Activated naive CD4-positive, alpha-beta T cell treated with anti-CD3 and anti-CD28 coated beads for 36 hours (primary cell): ENCODE measurements at regions of chr1 and their contacts with region 1.

Region 1: GRCh38 chr1:40032240-40032891 is 8.2 kb upstream of the CAP1 start:
- DNase-seq: peak; percentile 76
- H3K4me3 Mint-ChIP-seq: no peak overlapping the region
- H3K27ac Mint-ChIP-seq: no peak overlapping the region
- H3K4me1 Mint-ChIP-seq: peaks cover 36% of the 10 kb centered on the region
- H3K27me3 Mint-ChIP-seq: no peaks in the 10 kb centered on the region

Region 2: DNA sequence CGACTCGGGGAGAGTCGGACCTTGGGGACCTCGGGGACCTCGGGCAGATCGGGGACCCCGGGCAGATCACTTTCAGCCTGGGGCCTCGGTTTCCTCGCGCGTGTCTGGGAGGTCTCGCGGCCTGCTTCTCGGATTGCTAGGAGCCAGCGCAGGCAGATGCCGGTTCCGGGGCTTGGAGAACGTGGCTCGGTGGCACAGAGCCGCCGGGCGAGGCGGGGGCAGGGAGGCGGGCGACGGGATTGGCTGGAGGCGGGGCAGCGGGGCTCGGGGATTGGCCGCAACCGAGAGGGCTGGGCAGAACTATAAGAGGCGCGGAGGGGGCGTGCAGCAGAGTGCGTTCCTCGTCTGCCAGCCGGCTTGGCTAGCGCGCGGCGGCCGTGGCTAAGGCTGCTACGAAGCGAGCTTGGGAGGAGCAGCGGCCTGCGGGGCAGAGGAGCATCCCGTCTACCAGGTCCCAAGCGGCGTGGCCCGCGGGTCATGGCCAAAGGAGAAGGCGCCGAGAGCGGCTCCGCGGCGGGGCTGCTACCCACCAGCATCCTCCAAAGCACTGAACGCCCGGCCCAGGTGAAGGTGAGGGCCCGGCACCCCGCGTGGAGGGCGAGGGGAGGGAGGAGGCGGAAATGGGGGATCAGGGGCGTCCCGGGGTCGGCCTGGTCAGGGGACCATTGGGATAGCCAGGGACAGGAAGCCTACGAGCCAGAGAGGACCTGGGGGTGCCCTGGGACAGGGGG is 77.4 kb before region 1 on chr1 and contains the start of gene MFSD2A:
- CTCF ChIA-PET with region 1: interaction called, 5 read pairs
- intact Hi-C with region 1: loop called (anchors 5 kb)
- DNase-seq: peak; percentile 89
- H3K4me3 Mint-ChIP-seq: peak within 1 kb of the TSS; percentile 88
- H3K27ac Mint-ChIP-seq: peak within 1 kb of the TSS; percentile 77
- H3K4me1 Mint-ChIP-seq: peaks cover 33% of the 10 kb centered on the region
- H3K27me3 Mint-ChIP-seq: no peaks in the 10 kb centered on the region
- total RNA-seq, gene MFSD2A: 4.0 to 4.5 TPM

Region 3: DNA sequence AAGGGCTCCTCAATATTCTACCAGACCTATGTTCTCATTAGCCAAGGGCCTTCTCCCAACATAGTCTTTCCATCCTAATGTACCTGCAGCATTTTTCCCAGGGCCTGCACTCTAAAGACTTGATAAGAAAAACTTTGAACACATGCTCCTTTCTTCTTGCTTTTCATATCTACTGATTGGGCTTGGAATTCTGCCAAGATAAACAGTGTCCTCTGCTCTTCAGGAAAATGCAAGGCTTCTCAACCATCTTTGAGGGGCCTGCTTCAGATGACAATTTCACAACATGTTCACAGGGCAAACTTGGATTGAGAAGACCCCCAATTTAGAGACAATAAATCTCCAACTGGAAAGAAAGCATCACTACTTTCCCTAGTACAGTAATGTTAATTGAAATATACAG is 90.5 kb after region 1 on chr1:
- CTCF ChIA-PET with region 1: no interaction called
- intact Hi-C with region 1: no loop called
- DNase-seq: no peak
- H3K4me3 Mint-ChIP-seq: no peak overlapping the region
- H3K27ac Mint-ChIP-seq: no peak overlapping the region
- H3K4me1 Mint-ChIP-seq: no peaks in the 10 kb centered on the region
- H3K27me3 Mint-ChIP-seq: no peaks in the 10 kb centered on the region